Posterior cingulate gyrus (tissue), 11 donors: ENCODE measurements at regions of chr1 and their contacts with region 1.

Region 1: DNA sequence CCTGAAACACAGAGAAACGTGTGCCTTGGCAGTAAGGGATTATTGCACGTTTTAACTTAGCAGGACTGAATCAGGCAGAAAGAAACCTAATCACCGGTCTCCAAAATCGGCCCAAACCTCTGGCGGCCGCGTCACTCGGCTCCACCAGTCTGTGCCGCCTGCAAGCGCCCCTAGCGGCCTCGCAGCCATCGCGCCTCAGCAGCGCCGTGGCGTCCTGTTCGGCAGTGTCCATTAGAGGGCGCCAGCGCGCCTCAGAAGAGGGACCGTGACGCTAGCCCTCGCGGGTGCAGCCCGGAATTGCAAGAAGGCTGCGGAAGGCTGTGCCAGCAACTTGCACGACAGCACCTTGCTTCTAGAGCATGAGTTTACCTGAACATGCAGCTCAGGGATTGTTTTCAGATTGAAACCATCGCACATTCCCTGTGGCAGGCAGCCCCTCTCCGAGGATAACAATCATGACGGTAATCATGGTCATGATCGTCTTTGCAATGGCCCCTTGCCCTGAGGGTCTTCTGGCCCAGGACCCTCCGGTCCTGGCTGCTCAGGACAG is 164.4 kb downstream of the TRIM33 start:
- DNase-seq: peak; percentile 87 to 99 (median 96)

Region 2: GRCh38 chr1:114428083-114428749 is 81.7 kb after region 1 on chr1:
- intact Hi-C with region 1: loop called (anchors 5 kb)
- DNase-seq: no peak

Region 3: DNA sequence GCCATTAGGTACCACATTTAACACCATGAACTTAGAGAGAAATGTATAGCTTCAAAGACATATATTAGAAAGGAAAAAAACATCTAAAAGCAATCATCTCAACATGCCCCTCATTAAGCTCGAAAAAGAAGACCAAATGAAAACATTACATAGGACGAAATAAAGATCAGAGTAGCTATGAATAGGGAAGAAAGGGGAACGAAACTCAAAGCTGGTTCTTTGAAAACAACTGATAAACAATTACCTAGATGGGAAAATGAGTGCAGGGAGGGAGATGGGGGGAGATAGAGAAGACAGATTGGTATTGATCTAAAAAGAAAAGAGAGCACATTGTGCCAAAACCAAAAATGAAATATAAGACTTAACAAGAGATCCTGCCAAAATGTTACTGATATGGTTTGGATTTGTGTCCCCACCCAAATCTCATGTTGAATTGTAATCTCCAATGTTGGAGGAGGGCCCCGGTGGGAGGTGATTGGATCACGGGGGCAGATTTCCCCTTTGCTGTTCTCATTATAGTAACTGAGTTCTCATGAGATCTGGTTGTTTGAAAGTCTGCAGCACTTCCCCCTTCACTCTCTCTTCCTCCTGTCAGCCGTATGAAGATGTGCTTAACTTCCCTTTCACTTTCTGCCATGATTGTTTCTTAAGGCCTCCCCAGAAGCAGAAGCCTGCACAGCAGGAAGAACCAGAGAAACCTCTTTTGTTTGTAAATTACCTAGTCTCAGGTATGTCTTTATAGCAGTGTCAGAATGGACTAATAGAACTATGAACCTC is 135.8 kb after region 1 on chr1:
- intact Hi-C with region 1: no loop called
- DNase-seq: no peak

Region 4: GRCh38 chr1:114511032-114511785 is 164.7 kb after region 1 on chr1 and contains the start of gene TRIM33:
- intact Hi-C with region 1: loop called (anchors 2 kb)
- DNase-seq: peak; percentile 83 to 99 (median 90)